Activated naive CD4-positive, alpha-beta T cell treated with anti-CD3 and anti-CD28 coated beads for 36 hours (primary cell): ENCODE measurements at regions of chr19 and their contacts with region 1.

Region 1: GRCh38 chr19:4732680-4733114 is 9.1 kb upstream of the DPP9 start:
- DNase-seq: peak; percentile 62
- H3K4me3 Mint-ChIP-seq: peak overlapping the region; percentile 23
- H3K27ac Mint-ChIP-seq: no peak overlapping the region
- H3K4me1 Mint-ChIP-seq: peaks cover 8% of the 10 kb centered on the region
- H3K27me3 Mint-ChIP-seq: no peaks in the 10 kb centered on the region

Region 2: DNA sequence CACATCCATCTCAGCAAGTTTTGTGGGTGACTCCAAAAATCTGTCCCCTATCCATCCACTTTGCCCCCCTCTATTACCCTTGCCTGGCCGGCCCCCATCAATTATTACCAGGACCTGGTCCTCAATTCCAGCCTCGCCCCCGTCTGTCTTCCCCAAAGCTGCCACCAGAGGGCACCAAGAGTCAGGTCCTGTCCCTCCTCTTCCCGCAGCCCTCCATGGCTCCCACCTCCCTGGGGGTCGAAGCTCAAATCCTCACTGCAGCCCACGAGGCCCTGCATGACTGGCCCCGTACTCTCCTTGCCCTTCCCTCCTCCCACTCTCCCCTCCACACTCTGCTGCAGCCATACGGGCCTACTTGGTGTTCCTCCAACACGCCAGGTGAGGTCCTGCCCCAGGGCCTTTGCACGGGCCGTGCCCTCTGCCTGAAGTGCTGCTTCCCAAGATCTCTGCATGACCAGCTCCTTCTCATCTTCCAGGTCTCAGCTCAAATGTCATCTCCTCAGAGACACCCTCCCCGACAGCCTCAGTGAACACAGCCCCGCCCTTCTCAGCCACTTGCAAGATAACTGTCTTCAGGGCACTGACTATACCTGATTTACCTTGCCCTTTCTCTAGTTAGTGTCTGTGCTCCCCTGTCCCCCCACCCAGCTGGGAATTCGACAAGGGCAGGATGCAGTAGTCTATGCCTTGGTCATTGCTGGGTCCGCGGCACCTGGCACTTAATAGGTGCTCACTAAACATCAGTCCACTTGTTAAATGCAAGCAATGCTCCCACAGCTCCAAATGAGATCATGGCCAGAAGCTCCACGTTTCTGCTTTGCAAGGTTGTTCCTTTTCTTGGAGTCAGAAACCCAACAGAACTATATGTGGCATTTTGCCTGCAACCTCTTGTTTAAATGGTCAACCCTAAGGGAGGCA is 156.4 kb before region 1 on chr19:
- CTCF ChIA-PET with region 1: no interaction called
- intact Hi-C with region 1: no loop called
- DNase-seq: peak; percentile 87
- H3K4me3 Mint-ChIP-seq: no peak overlapping the region
- H3K27ac Mint-ChIP-seq: no peak overlapping the region
- H3K4me1 Mint-ChIP-seq: peaks cover 11% of the 10 kb centered on the region
- H3K27me3 Mint-ChIP-seq: peaks cover 40% of the 10 kb centered on the region

Region 3: GRCh38 chr19:4803736-4804695 is 71.3 kb after region 1 on chr19:
- CTCF ChIA-PET with region 1: interaction called, 26 read pairs
- intact Hi-C with region 1: loop called (anchors 1 kb)
- DNase-seq: peak; percentile 72
- H3K4me3 Mint-ChIP-seq: peak overlapping the region; percentile 24
- H3K27ac Mint-ChIP-seq: no peak overlapping the region
- H3K4me1 Mint-ChIP-seq: peaks cover 2% of the 10 kb centered on the region
- H3K27me3 Mint-ChIP-seq: no peaks in the 10 kb centered on the region